ENCODE measurements at regions of chr6 and their contacts with region 1.

Region 1: GRCh38 chr6:114747987-114748630 is 405.3 kb upstream of the HS3ST5 start:
- DNase-seq: peak in 4 of 5 donors; percentile 7 to 27 (median 22)
- ATAC-seq: no peak
- H3K4me3 ChIP-seq: no peak overlapping the region
- H3K27ac ChIP-seq: no peak overlapping the region
- H3K4me1 ChIP-seq: no peaks in the 10 kb centered on the region
- H3K27me3 ChIP-seq: no peaks in the 10 kb centered on the region
- CTCF ChIP-seq: peak; percentile 32 to 70 (median 58)
- POLR2A ChIP-seq: no peak

Region 2: DNA sequence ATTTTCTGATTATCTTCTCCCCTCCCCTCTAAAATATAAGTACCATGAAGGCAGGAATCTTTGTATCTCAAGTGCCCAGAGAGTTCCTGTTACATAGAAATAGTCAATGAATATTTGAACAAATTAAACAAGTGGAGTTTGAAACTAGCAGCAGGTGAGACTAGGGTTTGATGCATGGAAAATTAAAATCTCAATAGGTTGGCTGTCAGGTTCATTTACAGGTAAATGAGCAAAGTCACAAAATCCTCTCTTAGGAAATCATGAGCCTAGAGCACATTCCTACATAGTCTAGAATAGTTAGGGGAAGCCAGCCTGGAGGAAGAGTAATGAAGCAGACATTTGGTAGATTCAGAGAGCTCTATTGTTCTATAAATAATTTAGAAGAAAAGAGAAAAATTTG is 545.7 kb before region 1 on chr6:
- intact Hi-C with region 1: no loop called
- DNase-seq: no peak
- ATAC-seq: no peak
- H3K4me3 ChIP-seq: no peak overlapping the region
- H3K27ac ChIP-seq: no peak overlapping the region
- H3K4me1 ChIP-seq: no peaks in the 10 kb centered on the region
- H3K27me3 ChIP-seq: no peaks in the 10 kb centered on the region
- CTCF ChIP-seq: no peak
- POLR2A ChIP-seq: no peak

Region 3: DNA sequence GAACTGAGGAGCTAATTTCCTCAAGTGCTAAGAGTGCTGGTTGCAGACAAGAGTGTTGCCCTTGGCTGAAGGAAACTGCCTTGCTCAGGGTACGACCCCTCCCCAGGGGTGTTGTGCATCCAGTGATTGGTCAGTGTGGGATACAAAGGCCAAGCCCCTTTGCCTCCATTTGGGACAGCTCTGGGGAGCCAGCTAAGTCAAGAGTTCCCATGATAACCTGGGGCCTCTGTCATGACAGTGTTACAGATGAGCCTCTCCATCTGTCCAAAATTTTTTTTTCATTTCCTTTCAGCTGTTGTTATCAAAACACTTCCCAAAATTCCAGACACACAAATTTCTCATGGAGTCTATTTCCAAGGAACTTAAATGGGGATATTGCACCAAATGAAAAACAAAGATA is 498.6 kb before region 1 on chr6:
- intact Hi-C with region 1: no loop called
- DNase-seq: no peak
- ATAC-seq: no peak
- H3K4me3 ChIP-seq: no peak overlapping the region
- H3K27ac ChIP-seq: no peak overlapping the region
- H3K4me1 ChIP-seq: no peaks in the 10 kb centered on the region
- H3K27me3 ChIP-seq: no peaks in the 10 kb centered on the region
- CTCF ChIP-seq: no peak
- POLR2A ChIP-seq: no peak

Region 4: DNA sequence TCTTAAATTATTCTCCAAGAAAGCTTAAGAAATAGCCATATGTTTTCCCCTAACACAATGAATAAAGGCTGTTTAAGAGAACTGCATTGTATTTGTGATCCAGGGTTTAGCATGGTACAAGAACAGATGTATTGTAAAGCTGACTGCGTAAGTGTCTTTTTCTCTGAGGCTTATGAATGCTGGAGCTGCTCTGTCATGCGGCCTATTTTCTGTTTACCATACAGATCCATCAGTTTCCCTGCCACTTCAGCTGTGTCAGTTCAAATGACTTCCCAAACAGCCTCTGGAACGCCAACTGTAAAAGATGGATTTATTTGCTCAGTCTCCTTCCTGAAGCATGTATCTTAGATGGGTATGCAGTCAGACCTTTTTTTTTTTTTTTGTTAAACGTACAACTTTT is 14.0 kb after region 1 on chr6:
- intact Hi-C with region 1: no loop called
- DNase-seq: no peak
- ATAC-seq: no peak
- H3K4me3 ChIP-seq: no peak overlapping the region
- H3K27ac ChIP-seq: no peak overlapping the region
- H3K4me1 ChIP-seq: no peaks in the 10 kb centered on the region
- H3K27me3 ChIP-seq: no peaks in the 10 kb centered on the region
- CTCF ChIP-seq: no peak
- POLR2A ChIP-seq: no peak

Region 5: GRCh38 chr6:114785235-114786127 is 37.4 kb after region 1 on chr6:
- intact Hi-C with region 1: no loop called
- DNase-seq: no peak
- ATAC-seq: no peak
- H3K4me3 ChIP-seq: no peak overlapping the region
- H3K27ac ChIP-seq: no peak overlapping the region
- H3K4me1 ChIP-seq: no peaks in the 10 kb centered on the region
- H3K27me3 ChIP-seq: no peaks in the 10 kb centered on the region
- CTCF ChIP-seq: no peak
- POLR2A ChIP-seq: no peak

Region 6: GRCh38 chr6:115891111-115891669 is 1143.1 kb after region 1 on chr6:
- intact Hi-C with region 1: loop called (anchors 2 to 10 kb)
- DNase-seq: no peak
- ATAC-seq: no peak
- H3K4me3 ChIP-seq: no peak overlapping the region
- H3K27ac ChIP-seq: no peak overlapping the region
- H3K4me1 ChIP-seq: no peaks in the 10 kb centered on the region
- H3K27me3 ChIP-seq: no peaks in the 10 kb centered on the region
- CTCF ChIP-seq: no peak
- POLR2A ChIP-seq: no peak

Region 7: GRCh38 chr6:115896538-115897129 is 1148.5 kb after region 1 on chr6:
- intact Hi-C with region 1: loop called (anchors 2 to 10 kb)
- DNase-seq: no peak
- ATAC-seq: peak in 1 of 4 donors; percentile 46
- H3K4me3 ChIP-seq: no peak overlapping the region
- H3K27ac ChIP-seq: no peak overlapping the region
- H3K4me1 ChIP-seq: no peaks in the 10 kb centered on the region
- H3K27me3 ChIP-seq: no peaks in the 10 kb centered on the region
- CTCF ChIP-seq: peak; percentile 45 to 69 (median 58)
- POLR2A ChIP-seq: no peak